Calu3 (cell line): ENCODE measurements at regions of chr19 and their contacts with region 1.

Region 1: DNA sequence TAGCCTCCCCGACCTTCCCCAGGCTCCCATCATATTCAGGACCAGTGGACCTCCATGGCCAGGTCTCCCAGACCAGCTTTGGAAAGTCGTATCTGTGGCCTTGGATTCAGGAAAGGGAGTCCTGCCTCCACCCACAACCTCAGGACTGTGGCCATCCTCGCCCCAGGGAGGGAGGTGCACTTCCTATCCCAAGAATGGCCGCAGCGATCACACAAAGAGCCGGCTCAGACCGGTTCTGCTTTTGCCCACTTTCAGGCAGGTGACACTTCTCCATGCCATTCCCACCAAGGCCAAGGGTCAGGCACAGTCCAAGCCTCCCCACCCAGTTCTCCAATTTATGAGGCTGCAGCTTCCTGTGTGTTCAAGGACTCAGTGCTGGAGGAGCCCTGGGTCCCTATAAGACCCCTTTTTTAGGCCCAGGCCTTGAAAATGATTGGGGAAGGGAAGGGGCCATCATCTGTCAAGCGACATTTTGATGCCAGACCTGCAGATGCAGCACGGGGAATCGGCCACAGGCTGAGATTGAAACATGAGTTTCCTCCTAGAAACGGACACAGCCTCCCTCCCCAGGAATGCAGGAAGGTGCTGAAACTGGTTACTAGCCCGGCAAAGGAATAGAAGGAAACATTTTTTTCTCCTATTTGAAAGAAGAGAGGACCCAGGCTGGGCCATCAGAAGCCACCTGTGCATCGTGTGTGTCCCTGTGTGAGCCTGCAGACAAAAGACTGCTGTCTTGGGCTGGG is 65.6 kb upstream of the USE1 start:
- DNase-seq: no peak
- H3K4me3 Mint-ChIP-seq: no peak overlapping the region
- H3K27ac Mint-ChIP-seq: no peak overlapping the region
- H3K4me1 Mint-ChIP-seq: no peaks in the 10 kb centered on the region
- H3K27me3 Mint-ChIP-seq: no peaks in the 10 kb centered on the region
- CTCF ChIP-seq: no peak

Region 2: GRCh38 chr19:17052439-17053210 is 96.9 kb before region 1 on chr19:
- CTCF ChIA-PET with region 1: no interaction called
- intact Hi-C with region 1: no loop called
- DNase-seq: peak; percentile 28
- H3K4me3 Mint-ChIP-seq: no peak overlapping the region
- H3K27ac Mint-ChIP-seq: no peak overlapping the region
- H3K4me1 Mint-ChIP-seq: no peaks in the 10 kb centered on the region
- H3K27me3 Mint-ChIP-seq: no peaks in the 10 kb centered on the region
- CTCF ChIP-seq: peak; percentile 43

Region 3: GRCh38 chr19:17170538-17171297 is 21.2 kb after region 1 on chr19:
- CTCF ChIA-PET with region 1: no interaction called
- intact Hi-C with region 1: loop called (anchors 2 kb)
- DNase-seq: no peak
- H3K4me3 Mint-ChIP-seq: no peak overlapping the region
- H3K27ac Mint-ChIP-seq: no peak overlapping the region
- H3K4me1 Mint-ChIP-seq: peaks cover 8% of the 10 kb centered on the region
- H3K27me3 Mint-ChIP-seq: no peaks in the 10 kb centered on the region
- CTCF ChIP-seq: no peak